ENCODE measurements at regions of chr19 and their contacts with region 1.

Region 1: DNA sequence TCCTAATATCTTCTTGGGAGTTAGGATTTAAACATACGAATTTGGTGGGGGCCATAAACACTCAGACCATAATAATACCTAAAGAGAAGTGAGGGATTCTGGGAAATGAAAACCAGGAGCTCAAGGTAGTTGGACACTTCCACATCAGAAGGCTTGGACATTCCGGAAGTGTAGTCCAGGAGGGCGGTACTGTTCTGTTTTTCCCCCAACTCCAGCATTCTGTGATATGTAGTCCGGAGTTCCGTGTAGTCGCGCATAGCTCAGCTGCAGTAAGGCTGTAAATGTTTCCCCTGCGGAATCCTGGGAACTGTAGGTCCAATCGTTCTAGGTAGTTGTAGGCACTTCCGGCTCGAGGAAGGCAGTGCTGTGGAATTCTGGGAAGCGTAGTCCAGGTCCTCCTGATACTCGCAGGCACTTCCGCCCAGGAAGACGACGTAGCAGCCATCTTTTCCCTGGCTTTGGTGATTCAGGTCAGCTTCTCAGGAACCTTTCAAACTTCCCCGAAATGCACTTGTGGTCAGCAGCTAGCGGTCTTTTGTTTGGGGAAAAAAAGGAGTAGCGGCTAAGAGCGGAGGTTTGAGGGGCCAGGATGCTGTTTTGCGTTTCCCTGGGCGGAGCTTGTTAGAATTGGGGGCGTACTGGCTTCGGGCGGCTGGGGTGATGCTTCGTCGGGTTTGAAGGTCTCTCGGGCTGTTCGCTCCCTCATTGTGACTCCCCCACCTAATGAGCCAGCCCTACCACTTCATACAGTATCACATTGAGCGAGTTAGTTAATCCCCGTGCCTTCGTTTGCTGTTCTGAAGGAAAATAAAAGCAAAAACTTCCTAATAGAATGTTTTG is at the start of gene ZNF226:
- DNase-seq: peak; percentile 93
- H3K4me3 Mint-ChIP-seq: peak within 1 kb of the TSS; percentile 98
- H3K27ac Mint-ChIP-seq: peak within 1 kb of the TSS; percentile 96
- H3K4me1 Mint-ChIP-seq: peaks cover 26% of the 10 kb centered on the region
- H3K27me3 Mint-ChIP-seq: no peaks in the 10 kb centered on the region
- total RNA-seq, gene ZNF226: 10.4 and 12.3 TPM in 2 replicates

Region 2: GRCh38 chr19:44025217-44025936 is 139.5 kb before region 1 on chr19 and contains the start of gene ZNF222:
- intact Hi-C with region 1: loop called (anchors 1 kb)
- DNase-seq: peak; percentile 92
- H3K4me3 Mint-ChIP-seq: peak within 1 kb of the TSS; percentile 99
- H3K27ac Mint-ChIP-seq: peak within 1 kb of the TSS; percentile 91
- H3K4me1 Mint-ChIP-seq: peaks cover 16% of the 10 kb centered on the region
- H3K27me3 Mint-ChIP-seq: no peaks in the 10 kb centered on the region
- total RNA-seq, gene ZNF222: 1.1 and 1.8 TPM in 2 replicates

Region 3: GRCh38 chr19:44051654-44052402 is 113.1 kb before region 1 on chr19 and contains the start of gene ZNF223:
- intact Hi-C with region 1: no loop called
- DNase-seq: peak; percentile 63
- H3K4me3 Mint-ChIP-seq: peak within 1 kb of the TSS; percentile 79
- H3K27ac Mint-ChIP-seq: no peak within 1 kb of the TSS
- H3K4me1 Mint-ChIP-seq: peaks cover 3% of the 10 kb centered on the region
- H3K27me3 Mint-ChIP-seq: no peaks in the 10 kb centered on the region
- total RNA-seq, gene ZNF223: 0.40 TPM in 1 of 2 replicates, not detected in the other

Region 4: GRCh38 chr19:44141191-44142058 is 23.5 kb before region 1 on chr19 and contains the start of gene ZNF234:
- intact Hi-C with region 1: loop called (anchors 1 kb)
- DNase-seq: peak; percentile 90
- H3K4me3 Mint-ChIP-seq: peak within 1 kb of the TSS; percentile 92
- H3K27ac Mint-ChIP-seq: peak within 1 kb of the TSS; percentile 94
- H3K4me1 Mint-ChIP-seq: peaks cover 15% of the 10 kb centered on the region
- H3K27me3 Mint-ChIP-seq: no peaks in the 10 kb centered on the region
- total RNA-seq, gene ZNF234: 10.9 and 12.9 TPM in 2 replicates

Region 5: DNA sequence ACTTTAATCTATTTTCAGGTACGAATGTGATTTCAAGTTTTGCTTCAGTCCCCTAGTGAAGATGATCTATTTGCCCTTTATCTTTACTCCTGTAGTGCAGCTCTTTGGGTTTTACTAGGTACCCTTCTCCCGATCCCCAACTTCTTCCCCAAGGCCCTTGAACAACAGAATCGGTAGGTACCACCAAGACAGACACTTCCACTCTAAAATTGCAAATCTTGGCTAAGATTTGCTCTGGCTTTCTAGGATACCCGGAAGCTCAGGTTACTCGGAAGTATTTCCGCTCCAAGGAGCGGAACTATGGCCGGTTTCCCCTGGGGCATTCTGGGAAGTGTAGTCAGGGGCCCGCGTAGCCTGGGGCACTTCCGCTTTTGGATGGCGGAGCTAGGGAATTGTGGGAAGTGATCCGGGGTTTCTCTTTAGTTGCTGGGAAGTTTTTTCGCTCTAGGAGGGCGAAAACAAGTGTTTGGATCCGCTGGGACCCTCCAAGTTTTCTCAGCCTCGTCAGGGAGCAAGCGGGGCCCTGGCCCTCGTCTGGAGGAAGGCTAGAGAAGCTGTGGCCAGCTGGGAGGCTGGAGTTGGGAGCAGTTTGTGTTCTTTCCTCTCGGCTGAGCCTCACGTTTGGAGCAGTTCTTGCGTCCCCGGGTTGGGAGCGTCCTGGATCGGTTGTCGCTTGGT is 42.4 kb after region 1 on chr19:
- intact Hi-C with region 1: loop called (anchors 1 kb)
- DNase-seq: peak; percentile 94
- H3K4me3 Mint-ChIP-seq: peak overlapping the region; percentile 95
- H3K27ac Mint-ChIP-seq: peak overlapping the region; percentile 80
- H3K4me1 Mint-ChIP-seq: peaks cover 10% of the 10 kb centered on the region
- H3K27me3 Mint-ChIP-seq: peaks cover 2% of the 10 kb centered on the region

Region 6: DNA sequence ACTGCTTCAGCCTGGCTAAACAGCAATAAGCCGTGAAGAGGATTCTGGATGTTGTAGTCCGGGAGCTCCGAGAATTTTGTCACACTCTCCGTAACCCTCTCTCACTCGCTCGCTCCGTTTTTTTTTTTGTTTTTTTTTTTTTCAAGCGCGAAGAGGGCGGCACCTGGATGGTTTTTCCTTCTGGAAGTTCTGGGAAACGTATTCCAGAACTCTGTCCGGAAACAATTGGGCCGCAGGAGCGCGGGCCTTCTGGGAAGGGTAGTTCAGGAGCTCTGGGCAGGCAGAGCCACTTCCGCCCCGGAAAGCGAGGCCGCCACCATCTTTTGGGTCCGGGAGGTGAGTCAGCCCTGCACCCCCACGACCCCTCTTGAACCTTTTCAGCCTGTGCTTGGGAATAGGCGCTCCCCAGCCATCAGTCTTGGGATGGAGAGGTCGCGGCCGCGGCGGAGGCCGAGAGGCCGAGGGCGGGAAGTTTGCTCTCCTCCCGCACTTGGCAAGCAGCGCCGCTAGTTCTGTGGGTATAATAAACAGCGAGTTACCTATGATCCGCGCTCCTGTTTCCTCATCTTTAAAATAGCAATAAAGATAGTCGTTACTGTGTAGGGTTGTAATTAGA is 47.5 kb after region 1 on chr19 and contains the start of gene ZNF227:
- intact Hi-C with region 1: loop called (anchors 1 kb)
- DNase-seq: peak; percentile 93
- H3K4me3 Mint-ChIP-seq: peak within 1 kb of the TSS; percentile 94
- H3K27ac Mint-ChIP-seq: peak within 1 kb of the TSS; percentile 91
- H3K4me1 Mint-ChIP-seq: peaks cover 12% of the 10 kb centered on the region
- H3K27me3 Mint-ChIP-seq: no peaks in the 10 kb centered on the region
- total RNA-seq, gene ZNF227: 17.8 and 18.8 TPM in 2 replicates

Region 7: GRCh38 chr19:44304659-44305193 is 139.8 kb after region 1 on chr19 and contains the start of gene ZNF235:
- intact Hi-C with region 1: loop called (anchors 2 kb)
- DNase-seq: peak; percentile 90
- H3K4me3 Mint-ChIP-seq: peak within 1 kb of the TSS; percentile 90
- H3K27ac Mint-ChIP-seq: peak within 1 kb of the TSS; percentile 83
- H3K4me1 Mint-ChIP-seq: peaks cover 11% of the 10 kb centered on the region
- H3K27me3 Mint-ChIP-seq: no peaks in the 10 kb centered on the region
- total RNA-seq, gene ZNF235: 2.8 and 3.1 TPM in 2 replicates

Measured in activated CD4-positive, alpha-beta T cell treated with anti-CD3 and anti-CD28 coated beads, Interleukin-2, amount 10 ng/mL, durations not matched to agents 24 days and 14 days (primary cell).